Activated T-helper 2 cell treated with anti-CD3 and anti-CD28 coated beads, Interferon-gamma antibody, Interleukin-2, Interleukin-4, amounts not matched to agents 10 μg/mL and 5 μg/mL and 100 μg/mL, durations not matched to agents 14 hours and 24 hours and 36 hours (primary cell): ENCODE measurements at regions of chr3 and their contacts with region 1.

Region 1: DNA sequence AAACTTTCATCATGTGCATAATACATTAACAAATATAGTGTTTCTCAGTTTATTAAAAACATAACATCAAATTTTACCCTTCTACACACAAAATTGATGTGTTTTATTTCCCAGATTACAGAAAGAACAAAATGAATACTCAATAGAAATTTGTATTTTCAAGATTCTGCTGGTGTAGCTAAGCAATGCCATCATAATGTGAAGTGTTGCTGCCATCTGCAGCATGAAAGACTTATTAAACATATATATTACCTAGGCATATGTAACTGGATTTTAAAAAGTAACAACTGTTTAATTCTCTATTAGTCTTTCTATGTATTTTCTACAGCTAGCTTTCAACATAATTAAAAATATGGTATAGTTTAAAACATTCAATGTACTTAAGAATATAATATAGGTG is 27.5 kb downstream of the PLSCR5 start:
- DNase-seq: no peak
- H3K4me3 Mint-ChIP-seq: no peak overlapping the region
- H3K27ac Mint-ChIP-seq: no peak overlapping the region
- H3K4me1 Mint-ChIP-seq: no peaks in the 10 kb centered on the region
- H3K27me3 Mint-ChIP-seq: peaks cover 14% of the 10 kb centered on the region

Region 2: GRCh38 chr3:146065573-146066006 is 512.1 kb before region 1 on chr3:
- intact Hi-C with region 1: loop called (anchors 5 kb)
- DNase-seq: no peak
- H3K4me3 Mint-ChIP-seq: no peak overlapping the region
- H3K27ac Mint-ChIP-seq: no peak overlapping the region
- H3K4me1 Mint-ChIP-seq: no peaks in the 10 kb centered on the region
- H3K27me3 Mint-ChIP-seq: no peaks in the 10 kb centered on the region

Region 3: DNA sequence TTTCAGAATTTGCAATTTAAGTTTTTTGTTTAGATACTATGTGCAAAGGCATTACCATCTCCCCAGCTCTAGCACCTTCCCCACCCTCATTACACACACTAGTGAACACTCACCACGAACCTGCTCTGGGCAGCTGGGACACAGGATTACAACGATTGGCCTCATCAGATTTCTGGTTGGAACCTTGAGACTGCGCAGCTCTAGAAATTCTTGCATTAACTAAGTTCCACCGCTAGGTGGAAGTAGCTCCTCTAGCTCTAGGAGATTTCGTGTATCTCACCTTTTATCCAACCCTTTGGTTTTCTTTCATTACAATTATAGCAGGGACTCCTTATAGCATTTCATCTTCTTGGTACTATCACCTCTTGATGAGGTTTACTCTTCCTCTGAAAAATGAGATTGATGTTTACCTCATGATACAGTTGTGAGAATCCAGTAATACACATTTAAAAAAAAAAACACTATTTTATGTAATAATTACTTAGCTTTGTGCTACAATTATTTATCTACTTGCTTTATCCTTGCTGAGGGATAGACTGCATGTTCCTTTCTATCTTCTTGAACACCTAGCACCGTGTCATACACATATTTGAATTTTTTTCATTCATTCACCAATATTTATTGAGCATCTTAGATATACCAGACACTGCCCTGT is 388.0 kb before region 1 on chr3:
- intact Hi-C with region 1: loop called (anchors 10 kb)
- DNase-seq: no peak
- H3K4me3 Mint-ChIP-seq: no peak overlapping the region
- H3K27ac Mint-ChIP-seq: no peak overlapping the region
- H3K4me1 Mint-ChIP-seq: no peaks in the 10 kb centered on the region
- H3K27me3 Mint-ChIP-seq: no peaks in the 10 kb centered on the region

Region 4: GRCh38 chr3:146218880-146219866 is 358.5 kb before region 1 on chr3:
- intact Hi-C with region 1: loop called (anchors 1 kb)
- DNase-seq: no peak
- H3K4me3 Mint-ChIP-seq: no peak overlapping the region
- H3K27ac Mint-ChIP-seq: no peak overlapping the region
- H3K4me1 Mint-ChIP-seq: no peaks in the 10 kb centered on the region
- H3K27me3 Mint-ChIP-seq: no peaks in the 10 kb centered on the region

Region 5: GRCh38 chr3:146536696-146537095 is 41.0 kb before region 1 on chr3:
- intact Hi-C with region 1: no loop called
- DNase-seq: no peak
- H3K4me3 Mint-ChIP-seq: no peak overlapping the region
- H3K27ac Mint-ChIP-seq: no peak overlapping the region
- H3K4me1 Mint-ChIP-seq: peaks cover 50% of the 10 kb centered on the region
- H3K27me3 Mint-ChIP-seq: no peaks in the 10 kb centered on the region